ENCODE measurements at regions of chr6 and their contacts with region 1.

Region 1: DNA sequence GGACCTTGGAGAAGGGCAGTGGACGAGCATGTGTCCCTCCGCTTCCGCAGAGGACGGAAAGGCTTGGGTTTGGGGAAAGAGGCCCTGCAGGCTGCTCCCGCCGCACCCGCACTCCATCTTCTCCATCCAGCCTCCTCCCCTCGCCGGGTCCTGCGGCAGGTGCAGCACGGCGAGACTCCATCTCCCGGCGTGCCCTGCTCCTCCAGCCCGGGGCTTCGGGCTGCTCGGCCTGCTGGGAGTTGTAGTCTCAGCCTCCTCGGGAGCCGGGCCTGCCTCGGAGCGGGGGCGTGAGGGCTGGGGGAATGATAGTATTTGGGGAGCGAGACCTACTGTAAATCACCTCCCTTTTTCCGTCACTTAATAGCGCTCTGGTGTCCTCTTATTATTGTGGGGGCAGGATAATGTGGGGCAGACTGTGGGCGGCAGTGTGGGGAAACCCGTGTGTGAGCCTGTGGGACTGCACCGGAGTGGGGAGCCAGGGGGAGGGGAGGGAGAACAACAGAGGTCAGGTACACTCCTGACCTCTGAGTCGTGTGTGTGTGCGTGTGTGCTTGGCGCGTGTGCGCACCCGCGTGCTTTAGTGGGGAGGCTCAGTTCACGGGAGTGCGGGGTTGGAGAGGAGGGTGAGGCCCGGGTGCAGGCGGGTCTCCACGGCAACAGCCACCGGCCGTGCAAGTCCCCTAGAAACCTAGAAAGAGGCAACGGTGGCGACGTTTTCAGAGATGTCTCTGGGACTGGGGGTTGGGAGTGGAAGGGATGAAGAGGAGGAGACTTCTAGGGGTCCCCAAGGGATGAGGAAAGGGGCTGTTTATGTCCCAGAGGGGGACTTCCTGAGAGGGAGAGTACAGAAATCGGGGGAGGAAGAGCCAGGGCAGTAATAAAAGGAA is 4.1 kb downstream of the TTBK1 start:
- DNase-seq: peak; percentile 94
- H3K4me3 Mint-ChIP-seq: peak overlapping the region; percentile 82
- H3K27ac Mint-ChIP-seq: peak overlapping the region; percentile 91
- H3K4me1 Mint-ChIP-seq: peaks cover 30% of the 10 kb centered on the region
- H3K27me3 Mint-ChIP-seq: peaks cover 26% of the 10 kb centered on the region

Region 2: GRCh38 chr6:42923666-42924065 is 323.7 kb before region 1 on chr6:
- intact Hi-C with region 1: no loop called
- DNase-seq: no peak
- H3K4me3 Mint-ChIP-seq: no peak overlapping the region
- H3K27ac Mint-ChIP-seq: no peak overlapping the region
- H3K4me1 Mint-ChIP-seq: peaks cover 4% of the 10 kb centered on the region
- H3K27me3 Mint-ChIP-seq: no peaks in the 10 kb centered on the region

Region 3: DNA sequence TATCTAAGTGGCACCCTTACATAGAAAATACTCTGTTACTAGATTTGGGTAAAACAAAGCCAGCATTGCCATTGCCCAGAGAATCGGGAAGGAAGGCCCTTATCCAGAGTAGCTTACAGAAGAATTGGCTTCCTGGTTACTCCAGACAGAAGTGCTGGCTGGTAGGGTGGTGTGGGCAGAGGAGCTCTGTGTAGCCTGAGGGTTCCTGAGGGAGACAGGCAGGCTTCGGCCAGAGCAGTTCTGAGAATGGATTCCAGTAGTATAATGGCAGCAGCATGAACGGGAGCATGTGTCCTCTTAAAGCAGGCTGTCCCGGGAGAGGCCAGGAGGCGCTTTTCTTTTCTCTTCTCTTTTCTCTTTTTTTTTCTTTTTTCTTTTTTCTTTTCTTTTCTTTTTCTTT is 53.4 kb before region 1 on chr6:
- intact Hi-C with region 1: no loop called
- DNase-seq: no peak
- H3K4me3 Mint-ChIP-seq: no peak overlapping the region
- H3K27ac Mint-ChIP-seq: peak overlapping the region; percentile 13
- H3K4me1 Mint-ChIP-seq: peaks cover 5% of the 10 kb centered on the region
- H3K27me3 Mint-ChIP-seq: no peaks in the 10 kb centered on the region

Region 4: GRCh38 chr6:43228951-43229802 is 18.2 kb before region 1 on chr6 and contains the start of gene DNPH1:
- intact Hi-C with region 1: loop called (anchors 1 kb)
- DNase-seq: peak; percentile 96
- H3K4me3 Mint-ChIP-seq: peak within 1 kb of the TSS; percentile 92
- H3K27ac Mint-ChIP-seq: peak within 1 kb of the TSS; percentile 92
- H3K4me1 Mint-ChIP-seq: peaks cover 31% of the 10 kb centered on the region
- H3K27me3 Mint-ChIP-seq: peaks cover 16% of the 10 kb centered on the region
- total RNA-seq, gene DNPH1: 78.9 and 79.6 TPM in 2 replicates

Measured in activated CD4-positive, alpha-beta T cell treated with anti-CD3 and anti-CD28 coated beads, Interleukin-2, amount 10 ng/mL, durations not matched to agents 24 days and 14 days (primary cell).